Aorta (tissue), 5 donors: ENCODE measurements at regions of chr4 and their contacts with region 1.

Region 1: GRCh38 chr4:165537028-165537648 is 158.3 kb downstream of the CPE start:
- DNase-seq: no peak
- ATAC-seq: peak; percentile 72
- H3K4me3 ChIP-seq: no peak overlapping the region
- H3K27ac ChIP-seq: no peak overlapping the region
- H3K4me1 ChIP-seq: no peaks in the 10 kb centered on the region
- H3K27me3 ChIP-seq: peaks cover 0 to 2% of the 10 kb centered on the region in 2 donors

Region 2: GRCh38 chr4:165481053-165481835 is 55.9 kb before region 1 on chr4:
- intact Hi-C with region 1: no loop called
- DNase-seq: no peak
- ATAC-seq: no peak
- H3K4me3 ChIP-seq: no peak overlapping the region
- H3K27ac ChIP-seq: no peak overlapping the region
- H3K4me1 ChIP-seq: peaks cover 0 to 1% of the 10 kb centered on the region in 2 donors
- H3K27me3 ChIP-seq: no peaks in the 10 kb centered on the region

Region 3: GRCh38 chr4:166091912-166092510 is 554.9 kb after region 1 on chr4:
- intact Hi-C with region 1: loop called (anchors 2 to 5 kb)
- DNase-seq: no peak
- ATAC-seq: no peak
- H3K4me3 ChIP-seq: no peak overlapping the region
- H3K27ac ChIP-seq: no peak overlapping the region
- H3K4me1 ChIP-seq: no peaks in the 10 kb centered on the region
- H3K27me3 ChIP-seq: no peaks in the 10 kb centered on the region